ENCODE measurements at regions of chr12 and their contacts with region 1.

Region 1: DNA sequence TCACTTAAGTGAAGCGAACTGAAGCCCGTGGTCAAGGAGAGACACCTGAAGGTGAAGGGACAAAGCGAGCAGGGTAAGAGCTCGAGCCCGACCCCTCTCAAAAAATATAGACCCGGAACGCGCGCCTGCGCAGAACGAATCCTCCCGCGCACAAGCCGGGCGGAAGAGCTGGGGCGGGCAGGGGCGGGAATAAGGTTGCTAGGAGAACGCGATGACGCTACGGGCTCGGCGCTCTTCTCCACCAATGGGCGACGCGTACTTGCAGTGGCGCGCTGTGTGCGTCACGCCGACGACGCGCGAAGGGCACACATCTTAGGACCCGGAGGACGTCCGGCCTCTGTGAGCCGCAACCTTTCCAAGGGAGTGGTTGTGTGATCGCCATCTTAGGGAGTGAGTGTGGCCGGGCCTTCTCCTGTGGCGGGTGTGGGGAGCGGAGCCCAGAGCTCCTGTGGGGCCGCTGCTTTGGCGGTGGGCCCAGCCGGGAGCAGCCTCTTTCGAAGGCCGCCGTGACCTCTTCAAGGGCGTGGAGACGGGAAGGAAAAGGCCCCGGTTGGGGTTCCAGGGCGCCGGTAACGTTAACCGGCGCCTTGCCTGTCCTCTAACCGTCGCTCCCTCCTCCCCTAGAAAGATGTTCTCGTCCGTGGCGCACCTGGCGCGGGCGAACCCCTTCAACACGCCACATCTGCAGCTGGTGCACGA is at the start of gene SLC25A3:
- DNase-seq: peak; percentile 95
- ATAC-seq: peak; percentile 98
- H3K4me3 ChIP-seq: peak within 1 kb of the TSS; percentile 87
- H3K27ac ChIP-seq: peak within 1 kb of the TSS; percentile 84
- H3K4me1 ChIP-seq: no peaks in the 10 kb centered on the region
- H3K27me3 ChIP-seq: no peaks in the 10 kb centered on the region
- CTCF ChIP-seq: no peak
- EP300 ChIP-seq: 0 out of 4 replicates have a peak, but pooled peaks of 1 of the 2 experiments have one; percentile 23
- POLR2A ChIP-seq: peak; percentile 99
- RAD21 ChIP-seq: no peak
- polyA plus RNA-seq, gene SLC25A3: 314 to 677 TPM

Region 2: GRCh38 chr12:97650242-97650641 is 943.3 kb before region 1 on chr12:
- CTCF ChIA-PET with region 1: no interaction called
- POLR2A ChIA-PET with region 1: no interaction called
- RAD21 ChIA-PET with region 1: no interaction called
- SMC1A ChIA-PET with region 1: no interaction called
- in situ Hi-C with region 1: no loop called
- intact Hi-C with region 1: no loop called
- DNase-seq: no peak
- ATAC-seq: no peak
- H3K4me3 ChIP-seq: no peak overlapping the region
- H3K27ac ChIP-seq: no peak overlapping the region
- H3K4me1 ChIP-seq: no peaks in the 10 kb centered on the region
- H3K27me3 ChIP-seq: no peaks in the 10 kb centered on the region
- CTCF ChIP-seq: no peak
- EP300 ChIP-seq: no peak
- POLR2A ChIP-seq: no peak
- RAD21 ChIP-seq: no peak

Region 3: DNA sequence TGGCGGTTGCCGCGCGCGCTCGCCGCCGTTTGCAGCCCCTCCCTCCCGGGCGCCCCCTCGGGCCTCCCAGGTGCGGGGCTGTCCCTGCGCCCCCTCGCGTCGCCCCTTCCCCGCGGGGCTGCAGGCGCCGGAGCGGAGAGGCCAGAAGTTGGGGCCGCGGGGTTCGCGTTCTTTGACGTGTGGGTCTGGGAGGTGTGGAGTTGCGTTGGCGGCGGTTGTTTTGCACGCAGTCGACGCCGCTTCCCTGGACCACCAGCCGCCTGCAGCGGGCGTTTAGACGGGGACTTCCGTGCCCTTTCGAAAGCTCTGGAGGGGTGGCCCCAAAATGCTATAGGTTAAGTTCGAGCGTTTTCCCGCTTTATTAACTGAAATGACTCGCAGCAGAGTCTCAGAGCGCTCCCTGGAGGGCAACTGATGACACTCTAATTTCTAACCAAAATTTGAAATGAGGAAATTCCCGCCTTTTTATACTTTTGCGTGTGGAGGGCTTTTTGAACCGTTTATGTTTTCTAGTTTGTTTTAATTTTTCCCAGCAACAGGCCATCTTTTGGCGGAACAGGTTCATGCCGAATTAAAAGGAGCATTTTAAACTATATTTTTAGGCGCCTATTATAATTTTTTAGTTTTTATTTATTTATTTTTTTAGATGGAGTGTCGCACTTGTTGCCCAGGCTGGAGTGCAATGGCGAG is 77.2 kb before region 1 on chr12:
- CTCF ChIA-PET with region 1: no interaction called
- POLR2A ChIA-PET with region 1: interaction called, 8 read pairs
- RAD21 ChIA-PET with region 1: interaction called, 4 read pairs
- SMC1A ChIA-PET with region 1: interaction called, 5 read pairs
- in situ Hi-C with region 1: no loop called
- intact Hi-C with region 1: loop called (anchors 5 kb)
- DNase-seq: peak; percentile 79
- ATAC-seq: peak; percentile 64
- H3K4me3 ChIP-seq: peak overlapping the region; percentile 92
- H3K27ac ChIP-seq: peak overlapping the region; percentile 99
- H3K4me1 ChIP-seq: peaks cover 13% of the 10 kb centered on the region
- H3K27me3 ChIP-seq: no peaks in the 10 kb centered on the region
- CTCF ChIP-seq: peak; percentile 48 to 90 (median 71)
- EP300 ChIP-seq: 0 out of 4 replicates have a peak, but pooled peaks of 1 of the 2 experiments have one; percentile 12
- POLR2A ChIP-seq: peak; percentile 65
- RAD21 ChIP-seq: peak; percentile 76

Region 4: DNA sequence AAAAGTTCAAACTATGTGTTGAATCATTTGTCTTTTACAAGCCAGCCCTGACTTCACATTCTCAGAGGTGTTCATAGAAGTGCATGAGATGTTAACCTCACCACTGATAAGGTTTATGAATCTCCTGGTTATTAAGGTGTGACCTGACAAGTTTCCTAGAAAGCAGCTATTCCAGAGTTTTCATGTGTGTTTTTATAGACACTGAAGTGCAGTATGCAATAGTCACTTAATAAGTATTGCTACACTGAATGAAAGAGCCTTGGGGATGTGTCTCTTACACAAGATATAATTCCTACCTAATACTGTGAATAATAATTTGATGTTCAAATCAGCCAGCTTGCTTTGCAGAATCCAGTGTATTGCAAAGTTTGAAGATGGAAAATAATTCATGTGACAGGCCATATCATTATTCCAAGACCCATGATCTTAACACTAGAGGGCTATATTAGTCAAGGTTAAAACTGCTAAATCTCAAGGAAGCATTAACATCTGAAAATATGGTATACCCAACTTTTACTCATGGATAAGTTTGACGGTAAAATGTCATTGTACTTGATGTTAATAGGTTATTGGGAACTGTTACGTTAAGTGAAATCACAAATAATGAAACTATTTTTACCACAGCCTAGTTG is 13.0 kb after region 1 on chr12:
- CTCF ChIA-PET with region 1: interaction called, 7 read pairs
- POLR2A ChIA-PET with region 1: interaction called, 17 read pairs
- RAD21 ChIA-PET with region 1: interaction called, 6 read pairs
- SMC1A ChIA-PET with region 1: interaction called, 25 read pairs
- in situ Hi-C with region 1: no loop called
- intact Hi-C with region 1: no loop called
- DNase-seq: no peak
- ATAC-seq: no peak
- H3K4me3 ChIP-seq: no peak overlapping the region
- H3K27ac ChIP-seq: no peak overlapping the region
- H3K4me1 ChIP-seq: no peaks in the 10 kb centered on the region
- H3K27me3 ChIP-seq: no peaks in the 10 kb centered on the region
- CTCF ChIP-seq: peak in 1 of 3 experiments; percentile 42; a peak in 1 of 6 replicates
- EP300 ChIP-seq: no peak
- POLR2A ChIP-seq: no peak
- RAD21 ChIP-seq: peak; percentile 29; the same call in 1 of the 2 replicates

Region 5: GRCh38 chr12:98618952-98619351 is 25.5 kb after region 1 on chr12:
- CTCF ChIA-PET with region 1: interaction called, 7 read pairs
- POLR2A ChIA-PET with region 1: interaction called, 7 read pairs
- RAD21 ChIA-PET with region 1: interaction called, 3 read pairs
- SMC1A ChIA-PET with region 1: interaction called, 25 read pairs
- in situ Hi-C with region 1: no loop called
- intact Hi-C with region 1: no loop called
- DNase-seq: no peak
- ATAC-seq: no peak
- H3K4me3 ChIP-seq: no peak overlapping the region
- H3K27ac ChIP-seq: no peak overlapping the region
- H3K4me1 ChIP-seq: no peaks in the 10 kb centered on the region
- H3K27me3 ChIP-seq: no peaks in the 10 kb centered on the region
- CTCF ChIP-seq: no peak
- EP300 ChIP-seq: no peak
- POLR2A ChIP-seq: no peak
- RAD21 ChIP-seq: no peak

Region 6: DNA sequence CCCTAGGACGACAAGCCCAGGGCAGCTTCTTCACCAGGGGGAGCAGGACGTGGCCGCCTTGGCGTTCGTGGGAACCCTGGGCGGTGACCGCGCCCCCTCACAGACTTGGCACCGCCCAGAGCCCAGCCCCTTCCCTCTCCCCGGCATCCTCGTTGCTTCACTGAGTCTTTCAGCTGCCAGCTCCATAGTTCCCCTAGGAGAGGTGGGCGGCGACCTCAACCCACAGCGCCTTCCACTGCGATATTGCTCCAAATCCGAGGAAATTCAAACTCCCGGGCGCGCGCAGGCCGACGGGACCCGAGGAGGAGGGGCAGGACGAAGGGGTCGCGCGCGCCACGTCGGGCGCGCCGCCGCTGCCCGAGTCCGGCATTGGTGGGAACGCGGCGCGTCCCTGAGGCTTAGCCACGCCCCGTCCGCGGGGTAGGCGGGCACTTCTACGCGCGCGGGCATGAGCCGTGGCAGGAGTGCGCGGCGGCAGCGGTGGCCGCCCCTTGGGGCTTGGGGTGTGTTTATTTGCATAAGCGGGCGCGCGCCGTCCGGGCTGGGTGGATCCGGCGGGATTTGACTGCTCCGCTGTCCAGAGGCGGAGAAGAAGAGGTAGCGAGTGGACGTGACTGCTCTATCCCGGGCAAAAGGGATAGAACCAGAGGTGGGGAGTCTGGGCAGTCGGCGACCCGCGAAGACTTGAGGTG is 51.4 kb after region 1 on chr12 and contains the starts of genes APAF1 and IKBIP:
- CTCF ChIA-PET with region 1: interaction called, 21 read pairs
- POLR2A ChIA-PET with region 1: interaction called, 49 read pairs
- RAD21 ChIA-PET with region 1: interaction called, 27 read pairs
- SMC1A ChIA-PET with region 1: interaction called, 54 read pairs
- in situ Hi-C with region 1: no loop called
- intact Hi-C with region 1: loop called (anchors 1 kb)
- DNase-seq: peak; percentile 76
- ATAC-seq: peak; percentile 87
- H3K4me3 ChIP-seq: peak within 1 kb of the TSS; percentile 98
- H3K27ac ChIP-seq: peak within 1 kb of the TSS; percentile 94
- H3K4me1 ChIP-seq: no peaks in the 10 kb centered on the region
- H3K27me3 ChIP-seq: no peaks in the 10 kb centered on the region
- CTCF ChIP-seq: no peak
- EP300 ChIP-seq: 0 out of 4 replicates have a peak, but pooled peaks of 1 of the 2 experiments have one; percentile 5
- POLR2A ChIP-seq: peak; percentile 85
- RAD21 ChIP-seq: no peak
- polyA plus RNA-seq, gene APAF1: 4.2 to 5.0 TPM
- polyA plus RNA-seq, gene IKBIP: 5.4 to 12.2 TPM

Measured in GM12878 (cell line).